ENCODE measurements at regions of chr3 and their contacts with region 1.

Region 1: DNA sequence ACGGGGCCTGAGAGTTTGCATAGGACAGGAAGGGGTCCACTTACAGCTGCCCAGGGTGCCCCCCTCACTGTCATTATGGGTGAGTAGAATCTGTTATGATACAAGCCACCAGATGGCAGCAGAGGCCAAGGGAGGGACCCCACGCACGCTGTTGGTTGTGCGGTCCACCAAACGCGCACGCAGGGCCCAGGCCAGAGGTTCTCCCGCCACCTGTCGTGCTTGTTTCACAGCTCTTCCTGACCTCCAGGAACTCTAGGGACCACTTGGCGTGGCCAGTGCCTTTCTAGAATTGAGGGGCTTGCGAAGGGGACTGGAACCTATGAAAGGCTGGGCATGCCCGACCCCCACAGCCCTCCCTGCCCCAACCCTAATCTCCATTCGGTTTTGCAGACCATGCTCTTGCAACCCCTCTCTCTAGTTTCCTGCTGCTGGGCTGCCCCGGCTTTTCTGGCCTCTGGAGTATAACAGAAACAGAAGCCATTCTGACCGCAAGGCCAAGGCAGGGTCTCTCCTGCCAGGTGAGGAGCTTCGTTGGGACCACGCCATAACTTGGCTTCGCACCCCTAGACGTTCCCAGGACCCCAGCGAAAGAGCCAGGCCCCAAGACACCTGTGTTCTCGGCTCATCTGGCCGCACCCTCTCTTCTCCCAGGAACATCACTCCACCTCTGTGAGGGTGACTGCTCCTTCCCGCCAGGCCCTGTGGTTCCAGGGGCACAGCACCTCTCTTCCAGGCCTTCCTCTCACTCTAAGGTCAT is 46.0 kb downstream of the ALDH1L1 start:
- DNase-seq: peak; percentile 14
- H3K4me3 ChIP-seq: no peak overlapping the region
- H3K27ac ChIP-seq: no peak overlapping the region
- H3K4me1 ChIP-seq: peaks cover 7% of the 10 kb centered on the region
- H3K27me3 ChIP-seq: no peaks in the 10 kb centered on the region
- CTCF ChIP-seq: peak; percentile 47 to 84

Region 2: DNA sequence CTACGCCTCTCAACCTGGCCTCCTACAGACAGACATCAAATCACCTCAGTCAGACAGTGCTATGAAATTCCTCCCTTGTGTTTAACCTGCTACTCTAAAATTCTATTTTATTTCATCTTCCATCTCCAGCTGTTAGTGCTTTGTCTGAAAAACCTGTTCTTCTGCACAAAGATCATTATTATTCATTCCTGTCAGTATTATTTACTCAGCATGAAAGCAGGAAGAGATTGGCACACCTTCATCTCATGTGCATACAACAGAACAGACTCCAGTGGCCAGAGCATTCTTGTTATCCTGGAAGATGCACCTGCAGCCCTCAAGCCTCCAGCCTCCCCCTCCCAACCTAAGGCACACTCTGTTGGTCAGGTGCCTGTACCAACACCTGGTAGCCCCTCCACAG is 167.3 kb before region 1 on chr3:
- CTCF ChIA-PET with region 1: no interaction called
- dilution Hi-C with region 1: no loop called
- in situ Hi-C with region 1: no loop called
- intact Hi-C with region 1: loop called (anchors 5 kb)
- DNase-seq: no peak
- H3K4me3 ChIP-seq: no peak overlapping the region
- H3K27ac ChIP-seq: no peak overlapping the region
- H3K4me1 ChIP-seq: peaks cover 2% of the 10 kb centered on the region
- H3K27me3 ChIP-seq: peaks cover 4% of the 10 kb centered on the region
- CTCF ChIP-seq: no peak

Region 3: GRCh38 chr3:126245811-126246727 is 111.7 kb after region 1 on chr3:
- CTCF ChIA-PET with region 1: no interaction called
- dilution Hi-C with region 1: no loop called
- in situ Hi-C with region 1: no loop called
- intact Hi-C with region 1: loop called (anchors 1 kb)
- DNase-seq: no peak
- H3K4me3 ChIP-seq: no peak overlapping the region
- H3K27ac ChIP-seq: no peak overlapping the region
- H3K4me1 ChIP-seq: no peaks in the 10 kb centered on the region
- H3K27me3 ChIP-seq: no peaks in the 10 kb centered on the region
- CTCF ChIP-seq: peak; percentile 56 to 73

Region 4: GRCh38 chr3:126394575-126395228 is 260.3 kb after region 1 on chr3 and contains the start of gene CFAP100:
- CTCF ChIA-PET with region 1: no interaction called
- dilution Hi-C with region 1: loop called (anchors 5 kb)
- in situ Hi-C with region 1: loop called (anchors 10 to 25 kb)
- intact Hi-C with region 1: loop called (anchors 1 kb)
- DNase-seq: no peak
- H3K4me3 ChIP-seq: no peak within 1 kb of the TSS
- H3K27ac ChIP-seq: no peak within 1 kb of the TSS
- H3K4me1 ChIP-seq: no peaks in the 10 kb centered on the region
- H3K27me3 ChIP-seq: peaks cover 3% of the 10 kb centered on the region
- CTCF ChIP-seq: no peak
- total RNA-seq, gene CFAP100: not detected

Region 5: GRCh38 chr3:126567696-126568438 is 433.5 kb after region 1 on chr3:
- CTCF ChIA-PET with region 1: no interaction called
- dilution Hi-C with region 1: no loop called
- in situ Hi-C with region 1: no loop called
- intact Hi-C with region 1: loop called (anchors 5 kb)
- DNase-seq: no peak
- H3K4me3 ChIP-seq: no peak overlapping the region
- H3K27ac ChIP-seq: no peak overlapping the region
- H3K4me1 ChIP-seq: peaks cover 8% of the 10 kb centered on the region
- H3K27me3 ChIP-seq: peaks cover 3% of the 10 kb centered on the region
- CTCF ChIP-seq: peak; percentile 12 to 38